Natural killer cell (primary cell): ENCODE measurements at regions of chr7 and their contacts with region 1.

Region 1: GRCh38 chr7:100396421-100396982 is 23.2 kb downstream of the PILRA start:
- DNase-seq: peak in 1 of 2 donors; percentile 70
- ATAC-seq: peak; percentile 90 to 94 (median 91)
- H3K4me3 ChIP-seq: no peak overlapping the region
- H3K4me3 Mint-ChIP-seq: peak overlapping the region; percentile 93
- H3K27ac ChIP-seq: peak overlapping the region; percentile 65
- H3K27ac Mint-ChIP-seq: peak overlapping the region; percentile 94 to 98
- H3K4me1 ChIP-seq: peaks cover 22% of the 10 kb centered on the region
- H3K4me1 Mint-ChIP-seq: peaks cover 22 to 28% of the 10 kb centered on the region in 2 donors
- H3K27me3 ChIP-seq: no peaks in the 10 kb centered on the region
- H3K27me3 Mint-ChIP-seq: no peaks in the 10 kb centered on the region
- CTCF ChIP-seq: no peak

Region 2: DNA sequence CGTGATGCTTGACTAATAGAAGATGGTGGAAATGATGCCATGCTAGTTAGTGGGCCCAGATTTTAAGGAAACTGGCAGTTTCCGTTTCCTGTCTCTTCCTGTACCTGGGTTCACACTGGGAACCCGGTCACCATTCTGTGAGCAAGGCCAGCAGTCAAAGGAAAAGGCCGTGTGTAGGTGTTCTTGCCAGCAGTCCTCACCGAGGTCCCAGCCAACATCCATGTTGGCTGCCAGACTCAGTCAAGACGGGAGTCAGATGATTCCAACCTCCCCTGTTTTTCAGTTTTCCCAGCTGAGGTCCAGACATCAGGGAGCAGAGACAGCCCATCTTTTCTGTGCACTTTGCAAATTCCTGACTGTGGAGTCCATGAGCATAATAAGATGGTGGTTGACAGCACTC is 53.7 kb before region 1 on chr7:
- intact Hi-C with region 1: loop called (anchors 5 kb)
- DNase-seq: no peak
- ATAC-seq: no peak
- H3K4me3 ChIP-seq: no peak overlapping the region
- H3K4me3 Mint-ChIP-seq: peak overlapping the region; percentile 25
- H3K27ac ChIP-seq: peak overlapping the region; percentile 8
- H3K27ac Mint-ChIP-seq: peak overlapping the region; percentile 86 to 89
- H3K4me1 ChIP-seq: peaks cover 18% of the 10 kb centered on the region
- H3K4me1 Mint-ChIP-seq: peaks cover 25 to 34% of the 10 kb centered on the region in 2 donors
- H3K27me3 ChIP-seq: no peaks in the 10 kb centered on the region
- H3K27me3 Mint-ChIP-seq: no peaks in the 10 kb centered on the region
- CTCF ChIP-seq: no peak

Region 3: GRCh38 chr7:100469227-100470044 is 72.9 kb after region 1 on chr7:
- intact Hi-C with region 1: no loop called
- DNase-seq: peak; percentile 84 to 91
- ATAC-seq: peak; percentile 91 to 98 (median 94)
- H3K4me3 ChIP-seq: no peak overlapping the region
- H3K4me3 Mint-ChIP-seq: no peak overlapping the region
- H3K27ac ChIP-seq: no peak overlapping the region
- H3K27ac Mint-ChIP-seq: peak overlapping the region in 1 of 2 donors; percentile 18
- H3K4me1 ChIP-seq: peaks cover 26% of the 10 kb centered on the region
- H3K4me1 Mint-ChIP-seq: peaks cover 0 to 34% of the 10 kb centered on the region in 2 donors
- H3K27me3 ChIP-seq: no peaks in the 10 kb centered on the region
- H3K27me3 Mint-ChIP-seq: no peaks in the 10 kb centered on the region
- CTCF ChIP-seq: peak; percentile 86

Region 4: DNA sequence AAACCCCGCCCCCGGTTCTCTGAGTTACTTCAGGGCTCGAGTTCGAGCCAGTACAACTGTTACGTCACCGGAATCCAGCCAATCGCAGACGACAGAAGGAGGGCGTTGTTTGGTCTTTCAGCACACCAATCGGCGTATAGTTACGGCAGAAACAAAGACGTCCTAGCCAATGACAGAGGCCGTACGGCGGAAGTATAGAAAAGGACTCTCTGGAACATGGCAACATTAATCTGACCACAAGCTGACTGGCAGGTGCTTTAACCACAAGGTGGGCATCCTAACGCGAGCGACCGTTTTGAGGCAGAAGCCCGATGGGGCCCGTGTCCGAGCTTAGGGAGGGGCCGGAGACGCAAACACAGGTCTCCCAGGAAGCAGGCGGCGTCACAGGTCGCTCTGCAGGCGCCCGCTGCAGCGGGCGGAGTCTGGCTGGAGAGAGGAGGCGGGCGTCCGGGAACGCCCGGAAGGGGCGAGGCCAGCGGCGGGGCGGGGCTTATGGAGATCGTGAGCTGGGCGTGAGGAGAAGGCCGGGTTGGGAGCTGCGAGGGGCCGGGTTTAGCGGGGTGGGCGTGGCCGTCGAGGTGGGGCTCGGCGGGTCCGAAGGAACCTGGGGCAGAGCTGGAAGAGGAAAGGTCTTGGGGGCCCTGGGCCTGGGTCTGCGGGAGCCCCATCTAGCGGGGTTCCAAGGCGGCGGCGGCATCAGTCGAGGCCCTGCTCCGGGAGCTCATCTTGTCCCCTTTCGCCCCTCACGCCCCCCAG is 215.7 kb after region 1 on chr7 and contains the start of gene MOSPD3:
- intact Hi-C with region 1: no loop called
- DNase-seq: peak; percentile 98 to 99
- ATAC-seq: peak; percentile 91 to 97 (median 91)
- H3K4me3 ChIP-seq: peak within 1 kb of the TSS; percentile 91
- H3K4me3 Mint-ChIP-seq: peak within 1 kb of the TSS; percentile 99
- H3K27ac ChIP-seq: peak within 1 kb of the TSS; percentile 91
- H3K27ac Mint-ChIP-seq: peak within 1 kb of the TSS; percentile 99
- H3K4me1 ChIP-seq: peaks cover 23% of the 10 kb centered on the region
- H3K4me1 Mint-ChIP-seq: peaks cover 16 to 27% of the 10 kb centered on the region in 2 donors
- H3K27me3 ChIP-seq: no peaks in the 10 kb centered on the region
- H3K27me3 Mint-ChIP-seq: no peaks in the 10 kb centered on the region
- CTCF ChIP-seq: no peak
- total RNA-seq, gene MOSPD3: 14.5 to 15.9 (median 15.5) TPM